ENCODE measurements at regions of chr12 and their contacts with region 1.

Region 1: DNA sequence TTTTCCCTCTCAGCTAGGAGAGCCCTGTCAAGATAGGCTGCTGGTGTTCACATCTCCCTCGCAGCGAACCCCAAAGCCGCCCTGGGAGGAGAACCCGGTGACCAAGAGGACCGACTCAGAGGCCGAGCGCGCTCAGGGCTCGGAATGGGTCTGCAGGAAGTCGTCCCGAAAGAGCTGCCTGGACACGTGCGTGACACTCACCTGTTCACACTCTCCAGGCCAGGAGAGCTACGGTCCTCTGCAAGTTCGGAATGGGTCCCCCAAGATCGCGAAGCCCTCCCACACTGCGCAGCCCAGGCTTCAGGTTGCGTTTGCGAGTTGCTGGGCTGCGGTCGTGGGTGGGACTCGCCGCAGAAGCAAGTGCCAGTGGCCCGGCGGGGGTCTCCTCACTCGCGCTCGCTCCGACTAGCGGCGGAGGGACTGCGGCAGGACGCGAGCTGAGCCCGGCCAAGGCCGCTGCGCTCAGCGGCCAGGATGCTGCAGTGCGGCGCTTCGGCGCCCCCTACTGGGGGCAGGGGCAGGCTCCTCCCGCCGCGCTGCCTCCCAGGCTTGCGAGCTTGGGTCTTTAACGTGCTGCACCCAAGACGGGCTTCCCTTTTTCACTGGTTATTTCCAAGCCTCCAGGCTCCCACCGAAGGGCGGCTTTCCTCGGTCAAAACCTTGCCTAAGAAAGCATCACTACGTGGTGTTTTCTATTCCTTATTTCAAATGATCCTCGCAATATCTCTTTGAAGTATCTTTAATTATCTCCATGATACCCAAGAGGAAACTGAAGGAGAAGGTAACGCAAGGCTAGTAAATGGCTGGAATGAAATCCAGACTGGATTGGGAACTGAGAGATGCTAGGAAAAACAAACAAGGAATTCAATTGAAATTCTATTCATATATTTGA is at the start of gene RERG:
- DNase-seq: peak; percentile 47 to 75 (median 61)
- H3K4me3 ChIP-seq: peak within 1 kb of the TSS; percentile 36
- H3K4me3 Mint-ChIP-seq: peak within 1 kb of the TSS in 6 of 7 donors; percentile 59 to 82 (median 70)
- H3K27ac ChIP-seq: no peak within 1 kb of the TSS
- H3K27ac Mint-ChIP-seq: peak within 1 kb of the TSS in 1 of 8 donors; percentile 56
- H3K4me1 ChIP-seq: peaks cover 9% of the 10 kb centered on the region
- H3K4me1 Mint-ChIP-seq: peaks cover 4 to 14% (median 13%) of the 10 kb centered on the region in 3 donors
- H3K27me3 ChIP-seq: peaks cover 8% of the 10 kb centered on the region
- H3K27me3 Mint-ChIP-seq: peaks cover 15 to 34% of the 10 kb centered on the region in 2 donors
- total RNA-seq, gene RERG: not detected

Region 2: DNA sequence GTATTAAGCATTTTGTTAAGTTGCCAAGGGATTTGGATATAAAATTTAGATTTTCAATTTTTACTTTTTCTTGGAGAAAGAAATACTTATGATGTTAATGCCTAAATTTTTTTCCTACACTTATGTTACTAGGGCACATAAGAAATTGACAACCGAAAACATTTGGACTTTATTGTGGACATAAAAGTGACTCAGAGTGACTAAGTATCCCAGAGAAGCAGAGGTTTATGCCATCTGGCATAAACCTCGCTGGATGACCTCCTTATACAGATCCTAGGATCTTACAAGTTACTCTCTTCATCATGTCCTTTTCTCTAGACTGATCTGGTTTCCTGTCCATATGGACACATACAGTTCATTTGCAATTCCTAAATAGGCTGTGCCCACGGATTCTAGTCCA is 89.8 kb before region 1 on chr12:
- CTCF ChIA-PET with region 1: no interaction called
- POLR2A ChIA-PET with region 1: no interaction called
- DNase-seq: no peak
- H3K4me3 ChIP-seq: no peak overlapping the region
- H3K4me3 Mint-ChIP-seq: no peak overlapping the region
- H3K27ac ChIP-seq: no peak overlapping the region
- H3K27ac Mint-ChIP-seq: no peak overlapping the region
- H3K4me1 ChIP-seq: no peaks in the 10 kb centered on the region
- H3K4me1 Mint-ChIP-seq: no peaks in the 10 kb centered on the region
- H3K27me3 ChIP-seq: no peaks in the 10 kb centered on the region
- H3K27me3 Mint-ChIP-seq: peaks cover 2 to 15% of the 10 kb centered on the region in 2 donors

Region 3: DNA sequence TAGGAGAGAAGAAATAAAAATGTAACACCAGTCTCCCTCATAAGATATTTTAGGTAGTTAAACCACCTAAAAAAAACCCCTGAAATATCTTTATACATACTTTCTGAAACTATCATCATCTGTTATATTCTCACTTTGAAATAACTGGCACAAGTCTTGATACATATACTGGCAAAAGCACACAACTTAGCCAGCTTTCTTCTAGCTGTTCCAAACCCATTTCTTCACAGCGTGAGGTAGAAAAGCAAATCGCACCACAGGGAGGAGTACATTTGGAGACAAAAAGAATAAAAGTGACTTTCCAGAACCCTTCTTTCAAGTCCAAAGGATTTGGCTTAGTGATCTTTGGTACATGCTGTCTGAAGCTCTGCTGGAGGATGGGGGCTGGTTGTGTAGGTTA is 78.5 kb before region 1 on chr12:
- CTCF ChIA-PET with region 1: no interaction called
- POLR2A ChIA-PET with region 1: no interaction called
- DNase-seq: no peak
- H3K4me3 ChIP-seq: no peak overlapping the region
- H3K4me3 Mint-ChIP-seq: no peak overlapping the region
- H3K27ac ChIP-seq: no peak overlapping the region
- H3K27ac Mint-ChIP-seq: no peak overlapping the region
- H3K4me1 ChIP-seq: no peaks in the 10 kb centered on the region
- H3K4me1 Mint-ChIP-seq: no peaks in the 10 kb centered on the region
- H3K27me3 ChIP-seq: no peaks in the 10 kb centered on the region
- H3K27me3 Mint-ChIP-seq: peaks cover 20 to 37% of the 10 kb centered on the region in 2 donors

Region 4: GRCh38 chr12:15205341-15206010 is 15.8 kb before region 1 on chr12:
- CTCF ChIA-PET with region 1: interaction called, 13 read pairs
- POLR2A ChIA-PET with region 1: no interaction called
- DNase-seq: no peak
- H3K4me3 ChIP-seq: no peak overlapping the region
- H3K4me3 Mint-ChIP-seq: no peak overlapping the region
- H3K27ac ChIP-seq: no peak overlapping the region
- H3K27ac Mint-ChIP-seq: no peak overlapping the region
- H3K4me1 ChIP-seq: no peaks in the 10 kb centered on the region
- H3K4me1 Mint-ChIP-seq: no peaks in the 10 kb centered on the region
- H3K27me3 ChIP-seq: peaks cover 3% of the 10 kb centered on the region
- H3K27me3 Mint-ChIP-seq: peaks cover 7 to 36% of the 10 kb centered on the region in 2 donors

Region 5: DNA sequence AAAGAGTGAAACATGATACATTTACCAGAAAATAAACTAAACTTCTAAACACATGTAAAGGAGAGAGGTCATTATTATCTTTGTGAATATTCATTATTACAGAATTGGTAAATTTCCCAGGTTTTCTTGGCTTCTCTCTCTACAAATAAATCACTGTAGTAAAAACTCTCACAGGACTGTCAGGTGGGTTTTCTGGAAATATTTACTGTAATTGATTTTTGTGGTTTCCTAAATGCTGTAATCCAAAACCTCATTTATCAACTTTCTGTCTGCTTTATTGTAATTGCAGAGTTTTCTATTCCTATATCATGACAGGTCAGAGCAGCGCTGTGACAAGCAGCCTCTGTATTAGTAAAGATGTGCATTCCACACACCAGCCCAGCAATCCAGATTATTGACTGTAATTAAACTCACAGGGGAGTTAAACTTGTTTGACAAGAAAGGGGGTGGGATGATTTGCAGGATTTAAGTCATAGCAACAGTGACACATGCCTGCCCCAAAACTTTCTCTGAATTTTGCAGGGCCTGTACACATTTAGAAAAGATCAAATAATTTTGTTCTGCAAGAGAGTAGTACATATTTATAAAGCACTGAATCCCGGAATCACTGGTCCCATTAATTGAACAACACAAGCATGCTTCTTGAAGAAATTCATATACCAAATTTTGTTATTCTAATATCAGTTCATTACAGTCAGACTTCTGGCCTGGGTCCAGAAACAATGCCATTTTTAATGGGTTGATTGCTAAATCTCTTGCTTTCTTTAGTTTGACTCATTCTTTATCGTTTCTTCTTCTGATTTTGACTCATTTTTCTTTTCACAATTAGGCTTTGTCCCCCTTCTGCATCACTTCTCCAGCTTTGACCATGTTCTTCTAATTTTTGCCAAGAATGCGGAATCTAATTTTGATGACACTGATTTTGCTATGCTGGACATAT is 143.3 kb after region 1 on chr12:
- CTCF ChIA-PET with region 1: no interaction called
- POLR2A ChIA-PET with region 1: no interaction called
- DNase-seq: no peak
- H3K4me3 ChIP-seq: no peak overlapping the region
- H3K4me3 Mint-ChIP-seq: no peak overlapping the region
- H3K27ac ChIP-seq: no peak overlapping the region
- H3K27ac Mint-ChIP-seq: no peak overlapping the region
- H3K4me1 ChIP-seq: no peaks in the 10 kb centered on the region
- H3K4me1 Mint-ChIP-seq: no peaks in the 10 kb centered on the region
- H3K27me3 ChIP-seq: no peaks in the 10 kb centered on the region
- H3K27me3 Mint-ChIP-seq: peaks cover 0 to 6% of the 10 kb centered on the region in 2 donors